GM12878 (cell line): ENCODE measurements at regions of chr21 and their contacts with region 1.

Region 1: GRCh38 chr21:31218830-31219608 is 125.0 kb downstream of the TIAM1 start:
- DNase-seq: no peak
- ATAC-seq: peak; percentile 50
- H3K4me3 ChIP-seq: no peak overlapping the region
- H3K27ac ChIP-seq: no peak overlapping the region
- H3K4me1 ChIP-seq: no peaks in the 10 kb centered on the region
- H3K27me3 ChIP-seq: no peaks in the 10 kb centered on the region
- CTCF ChIP-seq: no peak
- EP300 ChIP-seq: no peak
- POLR2A ChIP-seq: no peak
- RAD21 ChIP-seq: no peak

Region 2: DNA sequence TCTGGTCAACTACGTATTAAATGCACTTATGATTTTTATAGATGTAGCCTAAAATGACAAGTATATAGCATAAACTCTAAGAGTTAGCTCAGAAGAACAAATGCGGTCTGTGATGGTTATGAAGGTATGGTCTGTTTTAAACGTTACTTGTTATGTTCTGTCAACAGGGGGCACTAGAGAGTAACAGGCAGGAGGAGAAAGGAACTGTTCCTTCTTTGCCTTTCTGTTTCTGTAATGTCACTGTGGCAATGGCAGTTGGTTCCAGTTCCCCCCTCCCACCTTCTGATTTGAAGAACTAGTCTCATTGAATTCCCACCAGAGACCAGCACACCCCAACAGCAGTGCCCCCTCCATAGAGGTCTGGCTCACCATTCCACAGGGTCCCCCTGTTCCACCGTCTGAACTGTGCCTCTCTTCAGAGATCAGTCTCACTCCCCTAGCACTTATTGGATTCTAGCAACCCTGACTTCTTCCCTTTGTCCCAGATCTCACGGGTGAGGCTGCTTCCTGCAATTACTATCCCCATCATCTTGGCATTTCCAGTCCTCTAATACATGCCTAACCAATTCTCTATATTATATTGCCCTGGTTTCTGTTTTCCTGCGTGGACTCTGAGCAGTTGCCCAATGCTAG is 950.3 kb before region 1 on chr21:
- CTCF ChIA-PET with region 1: no interaction called
- POLR2A ChIA-PET with region 1: no interaction called
- RAD21 ChIA-PET with region 1: no interaction called
- SMC1A ChIA-PET with region 1: no interaction called
- in situ Hi-C with region 1: no loop called
- intact Hi-C with region 1: no loop called
- DNase-seq: no peak
- ATAC-seq: peak; percentile 32; the same call in 1 of the 3 replicates
- H3K4me3 ChIP-seq: no peak overlapping the region
- H3K27ac ChIP-seq: no peak overlapping the region
- H3K4me1 ChIP-seq: no peaks in the 10 kb centered on the region
- H3K27me3 ChIP-seq: no peaks in the 10 kb centered on the region
- CTCF ChIP-seq: peak in 1 of 3 experiments; percentile 29; a peak in 2 of 6 replicates
- EP300 ChIP-seq: no peak
- POLR2A ChIP-seq: no peak
- RAD21 ChIP-seq: no peak

Region 3: GRCh38 chr21:31299291-31300147 is 80.5 kb after region 1 on chr21:
- CTCF ChIA-PET with region 1: no interaction called
- POLR2A ChIA-PET with region 1: no interaction called
- RAD21 ChIA-PET with region 1: interaction called, 6 read pairs
- SMC1A ChIA-PET with region 1: interaction called, 7 read pairs
- in situ Hi-C with region 1: no loop called
- intact Hi-C with region 1: loop called (anchors 2 kb)
- DNase-seq: peak; percentile 51
- ATAC-seq: peak; percentile 91
- H3K4me3 ChIP-seq: no peak overlapping the region
- H3K27ac ChIP-seq: no peak overlapping the region
- H3K4me1 ChIP-seq: no peaks in the 10 kb centered on the region
- H3K27me3 ChIP-seq: no peaks in the 10 kb centered on the region
- CTCF ChIP-seq: no peak
- EP300 ChIP-seq: peak in 1 of 2 experiments; percentile 85; a peak in 1 of 4 replicates
- POLR2A ChIP-seq: no peak
- RAD21 ChIP-seq: no peak

Region 4: DNA sequence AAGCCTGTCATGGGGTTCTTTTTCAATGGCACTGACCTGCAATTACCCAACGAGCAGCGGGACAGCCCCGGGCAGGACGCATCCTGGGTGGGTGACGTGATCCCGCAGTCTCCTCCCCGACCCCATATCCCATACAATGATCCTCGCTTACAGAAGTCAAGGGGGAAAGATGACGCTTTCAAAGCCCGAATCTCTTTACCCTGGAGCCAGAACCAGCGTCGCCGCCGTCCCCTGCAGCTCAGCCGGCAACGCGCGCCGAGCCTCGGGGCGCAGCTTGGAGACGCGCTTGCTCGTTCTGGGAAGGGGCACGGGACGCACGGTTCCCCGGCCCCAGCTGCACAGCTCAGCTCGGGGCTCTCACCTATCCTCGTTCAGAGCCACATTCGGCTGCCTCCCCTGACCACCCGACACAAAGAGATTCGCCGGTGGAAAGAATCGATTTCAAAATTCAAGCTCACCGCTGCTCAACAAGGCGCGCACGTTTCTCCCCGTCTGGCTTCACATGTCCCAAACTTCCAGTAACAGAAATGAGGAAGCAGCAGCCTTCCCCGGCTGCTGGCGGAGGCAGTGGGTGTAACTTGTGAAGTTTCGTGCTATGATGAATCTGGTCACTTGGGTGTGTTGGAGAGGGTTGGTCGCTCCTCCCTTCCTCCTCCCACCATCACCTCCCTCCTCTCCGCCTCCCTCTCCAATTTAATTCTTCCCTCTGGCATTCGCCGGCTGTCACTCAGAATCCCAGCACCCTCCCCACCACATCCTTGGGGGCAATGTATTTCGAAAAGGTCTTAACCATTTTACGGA is 124.9 kb after region 1 on chr21 and contains the start of gene TIAM1:
- CTCF ChIA-PET with region 1: no interaction called
- POLR2A ChIA-PET with region 1: interaction called, 5 read pairs
- RAD21 ChIA-PET with region 1: interaction called, 8 read pairs
- SMC1A ChIA-PET with region 1: interaction called, 16 read pairs
- in situ Hi-C with region 1: no loop called
- intact Hi-C with region 1: no loop called
- DNase-seq: no peak
- ATAC-seq: peak; percentile 76
- H3K4me3 ChIP-seq: no peak within 1 kb of the TSS
- H3K27ac ChIP-seq: no peak within 1 kb of the TSS
- H3K4me1 ChIP-seq: no peaks in the 10 kb centered on the region
- H3K27me3 ChIP-seq: no peaks in the 10 kb centered on the region; a peak in 1 of 4 replicates
- CTCF ChIP-seq: no peak
- EP300 ChIP-seq: no peak
- POLR2A ChIP-seq: no peak
- RAD21 ChIP-seq: no peak
- polyA plus RNA-seq, gene TIAM1: 0.31 to 0.42 TPM